Dendritic cell treated with granulocyte-macrophage colony-stimulating factor and Interleukin-4, amounts not matched to agents 40 ng/mL and 50 ng/mL, for 4 days (primary cell): ENCODE measurements at regions of chr6 and their contacts with region 1.

Region 1: GRCh38 chr6:162181741-162182401 is 545.7 kb downstream of the PRKN start:
- H3K4me3 Mint-ChIP-seq: no peak overlapping the region
- H3K27ac Mint-ChIP-seq: no peak overlapping the region
- H3K4me1 Mint-ChIP-seq: peaks cover 39% of the 10 kb centered on the region
- H3K27me3 Mint-ChIP-seq: peaks cover 38% of the 10 kb centered on the region

Region 2: DNA sequence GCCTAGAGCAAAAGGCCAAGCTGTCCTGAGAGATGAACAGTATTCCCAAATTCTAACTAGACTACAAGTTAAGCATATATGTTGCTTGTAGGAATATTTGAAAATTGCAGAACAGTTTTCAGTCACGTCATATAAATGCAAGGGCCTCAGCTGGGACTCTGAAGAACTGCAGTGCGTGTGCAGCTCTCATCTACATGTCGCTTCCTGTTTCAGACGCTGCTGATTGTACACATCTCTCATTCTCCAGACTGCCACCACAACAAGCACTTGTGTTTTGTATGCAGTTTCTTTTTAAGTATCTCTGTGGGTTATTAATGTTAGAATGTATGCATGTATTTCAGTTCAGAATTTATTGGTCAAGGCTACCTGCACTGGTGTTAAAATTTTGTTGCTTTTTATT is 1070.6 kb before region 1 on chr6:
- intact Hi-C with region 1: loop called (anchors 5 kb)
- H3K4me3 Mint-ChIP-seq: peak overlapping the region; percentile 68
- H3K27ac Mint-ChIP-seq: peak overlapping the region; percentile 95
- H3K4me1 Mint-ChIP-seq: peaks cover 79% of the 10 kb centered on the region
- H3K27me3 Mint-ChIP-seq: no peaks in the 10 kb centered on the region

Region 3: GRCh38 chr6:162294029-162294428 is 112.2 kb after region 1 on chr6:
- intact Hi-C with region 1: no loop called
- H3K4me3 Mint-ChIP-seq: no peak overlapping the region
- H3K27ac Mint-ChIP-seq: no peak overlapping the region
- H3K4me1 Mint-ChIP-seq: no peaks in the 10 kb centered on the region
- H3K27me3 Mint-ChIP-seq: no peaks in the 10 kb centered on the region

Region 4: GRCh38 chr6:163355426-163355991 is 1173.6 kb after region 1 on chr6:
- intact Hi-C with region 1: loop called (anchors 5 kb)
- H3K4me3 Mint-ChIP-seq: peak overlapping the region; percentile 62
- H3K27ac Mint-ChIP-seq: no peak overlapping the region
- H3K4me1 Mint-ChIP-seq: peaks cover 15% of the 10 kb centered on the region
- H3K27me3 Mint-ChIP-seq: no peaks in the 10 kb centered on the region